Endothelial cell of umbilical vein (primary cell): ENCODE measurements at regions of chr7 and their contacts with region 1.

Region 1: GRCh38 chr7:19747740-19748339 is 25.6 kb downstream of the TMEM196 start:
- DNase-seq: peak; percentile 43
- H3K4me3 ChIP-seq: no peak overlapping the region
- H3K27ac ChIP-seq: no peak overlapping the region
- H3K4me1 ChIP-seq: no peaks in the 10 kb centered on the region
- H3K27me3 ChIP-seq: peaks cover 1 to 12% of the 10 kb centered on the region in 2 experiments
- CTCF ChIP-seq: peak; percentile 25 to 46
- POLR2A ChIP-seq: no peak

Region 2: DNA sequence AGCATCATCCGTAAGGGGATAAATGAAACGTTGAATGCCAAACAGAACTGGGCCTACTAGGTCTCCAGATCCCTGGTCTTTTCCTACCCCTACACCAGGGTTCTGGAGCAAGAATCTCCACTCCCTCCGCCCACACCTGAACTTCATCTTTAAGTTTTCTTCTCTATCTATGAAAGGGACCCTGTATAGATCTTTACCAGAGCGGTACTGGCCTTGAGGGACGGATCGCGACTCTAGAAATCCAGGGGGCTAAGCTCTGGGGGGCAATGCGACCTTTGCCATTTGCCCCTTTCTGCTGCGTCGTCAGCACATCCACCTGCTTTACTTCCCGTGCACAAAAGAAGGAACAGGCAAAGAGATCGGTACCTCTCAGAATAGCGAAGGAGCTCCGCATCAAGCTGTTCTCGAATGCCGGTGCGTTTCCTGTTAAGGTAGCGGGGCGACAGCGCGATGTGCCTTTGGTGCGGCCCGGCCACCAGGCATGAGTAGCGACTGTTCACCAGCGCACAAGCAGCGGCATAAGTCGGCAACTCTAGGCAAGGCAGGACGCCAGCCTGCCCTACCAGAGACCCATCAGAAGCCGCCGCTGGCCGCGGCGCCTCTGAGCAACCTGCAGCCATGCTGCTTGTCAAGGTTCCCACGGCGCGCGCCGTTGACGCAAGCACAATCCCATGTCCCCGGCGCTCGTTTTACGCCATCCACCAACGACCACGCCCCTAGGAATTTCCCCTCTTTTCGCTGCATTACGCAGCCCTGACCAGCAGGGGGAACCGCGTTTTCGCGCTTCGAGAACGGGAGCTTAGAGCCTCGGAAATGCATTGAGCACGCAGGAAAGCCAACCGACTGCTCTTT is 39.2 kb before region 1 on chr7 and contains the start of gene POLR1F:
- CTCF ChIA-PET with region 1: interaction called, 71 read pairs
- POLR2A ChIA-PET with region 1: no interaction called
- dilution Hi-C with region 1: no loop called
- intact Hi-C with region 1: no loop called
- DNase-seq: peak; percentile 97
- H3K4me3 ChIP-seq: peak within 1 kb of the TSS; percentile 45 to 83 (median 77)
- H3K27ac ChIP-seq: peak within 1 kb of the TSS; percentile 44
- H3K4me1 ChIP-seq: peaks cover 19% of the 10 kb centered on the region
- H3K27me3 ChIP-seq: peaks cover 0 to 12% of the 10 kb centered on the region in 2 experiments
- CTCF ChIP-seq: peak; percentile 88 to 92
- POLR2A ChIP-seq: peak; percentile 92
- total RNA-seq, gene POLR1F: 21.0 and 27.0 TPM in 2 replicates

Region 3: GRCh38 chr7:19762631-19763030 is 14.8 kb after region 1 on chr7:
- CTCF ChIA-PET with region 1: interaction called, 33 read pairs
- POLR2A ChIA-PET with region 1: no interaction called
- dilution Hi-C with region 1: no loop called
- intact Hi-C with region 1: no loop called
- DNase-seq: no peak
- H3K4me3 ChIP-seq: no peak overlapping the region
- H3K27ac ChIP-seq: no peak overlapping the region
- H3K4me1 ChIP-seq: no peaks in the 10 kb centered on the region
- H3K27me3 ChIP-seq: no peaks in the 10 kb centered on the region
- CTCF ChIP-seq: no peak
- POLR2A ChIP-seq: no peak

Region 4: GRCh38 chr7:20172736-20173334 is 425.0 kb after region 1 on chr7:
- CTCF ChIA-PET with region 1: interaction called, 62 read pairs
- POLR2A ChIA-PET with region 1: no interaction called
- dilution Hi-C with region 1: no loop called
- intact Hi-C with region 1: loop called (anchors 1 kb)
- DNase-seq: peak; percentile 51
- H3K4me3 ChIP-seq: no peak overlapping the region
- H3K27ac ChIP-seq: no peak overlapping the region
- H3K4me1 ChIP-seq: no peaks in the 10 kb centered on the region
- H3K27me3 ChIP-seq: no peaks in the 10 kb centered on the region
- CTCF ChIP-seq: peak; percentile 55 to 66
- POLR2A ChIP-seq: no peak

Region 5: GRCh38 chr7:20330240-20330927 is 582.5 kb after region 1 on chr7 and contains the start of gene ITGB8:
- CTCF ChIA-PET with region 1: interaction called, 16 read pairs
- POLR2A ChIA-PET with region 1: no interaction called
- dilution Hi-C with region 1: no loop called
- intact Hi-C with region 1: no loop called
- DNase-seq: peak; percentile 90
- H3K4me3 ChIP-seq: peak within 1 kb of the TSS; percentile 51 to 62 (median 53)
- H3K27ac ChIP-seq: peak within 1 kb of the TSS; percentile 87
- H3K4me1 ChIP-seq: peaks cover 14% of the 10 kb centered on the region
- H3K27me3 ChIP-seq: no peaks in the 10 kb centered on the region
- CTCF ChIP-seq: no peak
- POLR2A ChIP-seq: no peak
- total RNA-seq, gene ITGB8: 6.5 and 8.2 TPM in 2 replicates

Region 6: GRCh38 chr7:20591058-20591457 is 843.2 kb after region 1 on chr7:
- CTCF ChIA-PET with region 1: interaction called, 280 read pairs
- POLR2A ChIA-PET with region 1: no interaction called
- dilution Hi-C with region 1: no loop called
- intact Hi-C with region 1: no loop called
- DNase-seq: no peak
- H3K4me3 ChIP-seq: no peak overlapping the region
- H3K27ac ChIP-seq: no peak overlapping the region
- H3K4me1 ChIP-seq: peaks cover 3% of the 10 kb centered on the region
- H3K27me3 ChIP-seq: no peaks in the 10 kb centered on the region
- CTCF ChIP-seq: no peak
- POLR2A ChIP-seq: no peak